ENCODE measurements at regions of chr3 and their contacts with region 1.

Region 1: DNA sequence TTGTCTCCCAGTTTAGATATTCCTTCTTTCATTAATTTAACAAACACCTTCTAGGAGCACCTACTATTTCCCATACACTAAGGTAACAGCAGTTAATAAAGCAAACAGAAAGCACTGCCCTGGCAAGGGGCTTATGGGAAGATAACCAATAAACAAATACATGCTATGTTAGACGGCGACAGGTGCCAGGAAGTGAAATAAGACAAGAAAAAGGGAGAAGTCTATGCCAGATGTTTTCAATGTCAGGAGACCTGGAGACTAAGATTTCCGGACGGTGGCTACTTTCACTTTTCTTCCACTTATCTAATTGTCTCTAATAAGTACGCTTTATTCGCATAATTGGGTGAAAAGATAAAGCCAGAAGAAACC is 32.5 kb upstream of the ZNF445 start:
- DNase-seq: peak in 3 of 9 donors; percentile 3 to 19 (median 12)
- ATAC-seq: peak; percentile 23
- H3K4me3 ChIP-seq: peak overlapping the region; percentile 73
- H3K4me3 Mint-ChIP-seq: peak overlapping the region; percentile 93 to 98 (median 96)
- H3K27ac ChIP-seq: peak overlapping the region; percentile 92
- H3K27ac Mint-ChIP-seq: peak overlapping the region; percentile 78 to 97 (median 93)
- H3K4me1 ChIP-seq: peaks cover 6 to 19% of the 10 kb centered on the region in 2 donors
- H3K4me1 Mint-ChIP-seq: peaks cover 30 to 52% (median 48%) of the 10 kb centered on the region in 7 donors
- H3K27me3 ChIP-seq: no peaks in the 10 kb centered on the region
- H3K27me3 Mint-ChIP-seq: no peaks in the 10 kb centered on the region

Region 2: GRCh38 chr3:44439499-44440295 is 70.3 kb before region 1 on chr3:
- CTCF ChIA-PET with region 1: no interaction called
- POLR2A ChIA-PET with region 1: interaction called, 3 read pairs
- intact Hi-C with region 1: loop called (anchors 1 to 2 kb)
- DNase-seq: peak; percentile 14 to 81 (median 69)
- ATAC-seq: peak; percentile 88
- H3K4me3 ChIP-seq: peak overlapping the region; percentile 17
- H3K4me3 Mint-ChIP-seq: peak overlapping the region; percentile 66 to 85 (median 78)
- H3K27ac ChIP-seq: peak overlapping the region; percentile 65
- H3K27ac Mint-ChIP-seq: peak overlapping the region; percentile 88 to 97 (median 95)
- H3K4me1 ChIP-seq: peaks cover 16 to 24% of the 10 kb centered on the region in 2 donors
- H3K4me1 Mint-ChIP-seq: peaks cover 23 to 44% (median 40%) of the 10 kb centered on the region in 7 donors
- H3K27me3 ChIP-seq: no peaks in the 10 kb centered on the region
- H3K27me3 Mint-ChIP-seq: no peaks in the 10 kb centered on the region

Region 3: DNA sequence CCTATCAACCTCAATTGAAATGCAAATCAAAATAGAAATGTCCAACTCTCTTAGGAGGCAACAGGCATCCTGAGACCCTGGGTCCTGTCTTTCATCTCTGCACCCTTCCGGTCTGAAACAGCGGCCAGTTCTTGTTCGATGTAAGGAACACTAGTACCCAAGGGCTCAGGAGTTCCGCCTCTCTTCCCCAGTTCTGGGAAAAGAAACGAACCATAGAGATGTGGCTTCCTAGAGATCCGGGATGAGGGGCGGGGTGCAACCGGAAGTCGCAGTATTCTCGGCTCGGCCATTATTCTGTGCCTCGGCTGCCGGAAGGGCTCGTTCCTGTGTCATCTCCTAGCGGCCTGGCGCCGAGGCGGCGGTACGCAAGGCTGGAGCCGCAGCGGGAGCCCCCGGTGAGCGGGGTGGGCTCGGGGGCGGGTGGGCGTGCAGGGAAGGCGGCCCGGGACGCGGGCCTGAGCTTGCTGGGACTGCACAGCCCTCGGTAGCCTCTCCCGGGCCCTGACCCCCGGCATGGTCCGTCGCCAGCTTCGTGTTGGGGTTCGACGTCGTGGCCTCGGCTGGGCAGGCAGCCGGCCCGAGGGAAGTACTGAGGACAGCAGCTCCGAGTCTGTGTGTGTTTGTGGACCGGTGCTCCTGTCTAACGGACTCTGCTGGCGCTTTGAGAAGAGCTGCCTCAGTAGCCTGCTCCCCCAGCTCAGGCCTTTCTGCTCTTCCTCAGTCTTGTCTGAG is 114.9 kb after region 1 on chr3 and contains the start of gene ZNF197:
- CTCF ChIA-PET with region 1: no interaction called
- POLR2A ChIA-PET with region 1: no interaction called
- intact Hi-C with region 1: loop called in 1 of 2 experiments (anchors 2 kb)
- DNase-seq: peak; percentile 5 to 64 (median 27)
- ATAC-seq: peak; percentile 80
- H3K4me3 ChIP-seq: peak within 1 kb of the TSS; percentile 51
- H3K4me3 Mint-ChIP-seq: peak within 1 kb of the TSS; percentile 83 to 94 (median 92)
- H3K27ac ChIP-seq: peak within 1 kb of the TSS; percentile 66
- H3K27ac Mint-ChIP-seq: peak within 1 kb of the TSS; percentile 60 to 88 (median 81)
- H3K4me1 ChIP-seq: peaks cover 9 to 10% of the 10 kb centered on the region in 2 donors
- H3K4me1 Mint-ChIP-seq: peaks cover 18 to 53% (median 47%) of the 10 kb centered on the region in 7 donors
- H3K27me3 ChIP-seq: no peaks in the 10 kb centered on the region
- H3K27me3 Mint-ChIP-seq: no peaks in the 10 kb centered on the region
- total RNA-seq, gene ZNF197: 5.5 to 15.6 (median 15.0) TPM

Region 4: DNA sequence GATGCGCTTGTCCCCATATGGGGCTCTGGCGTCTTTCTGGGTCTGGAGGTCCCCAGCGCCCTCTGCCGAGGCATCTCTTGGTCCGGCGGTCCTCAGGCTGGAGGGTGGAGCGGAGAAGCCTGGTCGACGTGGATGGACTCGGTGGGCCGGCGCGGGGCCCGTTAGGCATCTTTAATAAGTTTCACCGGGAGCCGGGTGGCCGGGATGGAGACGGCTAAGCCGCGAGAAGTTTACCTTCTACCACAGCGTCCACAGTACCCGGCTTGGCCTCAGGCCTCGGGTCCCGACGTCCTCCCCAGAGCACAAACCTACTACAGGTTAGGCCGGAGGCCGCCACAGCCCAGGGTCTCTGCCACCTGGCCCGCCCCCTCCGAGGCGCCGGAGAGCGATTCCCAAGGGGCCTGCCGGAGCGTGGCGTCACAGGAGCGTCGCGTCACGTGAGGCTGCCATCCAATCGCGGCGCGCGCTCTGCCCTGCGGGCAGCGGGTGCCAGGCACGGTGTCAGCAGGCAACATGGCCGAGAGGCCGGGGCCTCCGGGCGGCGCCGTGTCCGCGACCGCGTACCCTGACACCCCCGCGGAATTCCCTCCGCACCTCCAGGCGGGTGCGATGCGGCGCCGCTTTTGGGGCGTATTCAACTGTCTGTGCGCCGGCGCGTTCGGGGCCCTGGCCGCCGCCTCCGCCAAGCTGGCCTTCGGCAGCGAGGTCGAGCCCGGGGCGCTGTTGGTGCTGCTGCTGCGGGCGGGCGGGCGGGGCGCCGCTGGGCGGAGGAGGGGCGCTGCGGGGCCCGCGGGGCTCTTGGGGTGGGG is 351.6 kb after region 1 on chr3 and contains the start of gene TMEM42:
- CTCF ChIA-PET with region 1: no interaction called
- POLR2A ChIA-PET with region 1: no interaction called
- intact Hi-C with region 1: loop called (anchors 1 kb)
- DNase-seq: peak; percentile 81 to 89 (median 84)
- ATAC-seq: peak; percentile 97
- H3K4me3 ChIP-seq: peak within 1 kb of the TSS; percentile 78
- H3K4me3 Mint-ChIP-seq: peak within 1 kb of the TSS; percentile 88 to 92 (median 91)
- H3K27ac ChIP-seq: peak within 1 kb of the TSS; percentile 76
- H3K27ac Mint-ChIP-seq: peak within 1 kb of the TSS; percentile 86 to 97 (median 92)
- H3K4me1 ChIP-seq: peaks cover 15 to 29% of the 10 kb centered on the region in 2 donors
- H3K4me1 Mint-ChIP-seq: peaks cover 23 to 48% (median 43%) of the 10 kb centered on the region in 7 donors
- H3K27me3 ChIP-seq: no peaks in the 10 kb centered on the region
- H3K27me3 Mint-ChIP-seq: no peaks in the 10 kb centered on the region
- total RNA-seq, gene TMEM42: 12.1 to 25.1 (median 16.4) TPM

Measured in naive thymus-derived CD4-positive, alpha-beta T cell (primary cell).